Ascending aorta (tissue), 2 donors: ENCODE measurements at regions of chr3 and their contacts with region 1.

Region 1: GRCh38 chr3:49802719-49803464 is at the start of gene INKA1:
- DNase-seq: peak; percentile 49 to 93
- H3K4me3 ChIP-seq: peak within 1 kb of the TSS; percentile 84 to 86
- H3K27ac ChIP-seq: peak within 1 kb of the TSS; percentile 98
- H3K4me1 ChIP-seq: peaks cover 22 to 40% of the 10 kb centered on the region in 2 donors
- H3K27me3 ChIP-seq: no peaks in the 10 kb centered on the region
- CTCF ChIP-seq: peak; percentile 88 to 96 (median 89)
- total RNA-seq, gene INKA1: not detected

Region 2: GRCh38 chr3:49906004-49906743 is 103.3 kb after region 1 on chr3:
- intact Hi-C with region 1: loop called (anchors 1 kb)
- DNase-seq: peak in 1 of 2 donors; percentile 76
- H3K4me3 ChIP-seq: peak overlapping the region; percentile 5 to 53
- H3K27ac ChIP-seq: peak overlapping the region; percentile 50
- H3K4me1 ChIP-seq: peaks cover 0 to 14% of the 10 kb centered on the region in 2 donors
- H3K27me3 ChIP-seq: no peaks in the 10 kb centered on the region
- CTCF ChIP-seq: peak; percentile 60 to 74 (median 63)

Region 3: DNA sequence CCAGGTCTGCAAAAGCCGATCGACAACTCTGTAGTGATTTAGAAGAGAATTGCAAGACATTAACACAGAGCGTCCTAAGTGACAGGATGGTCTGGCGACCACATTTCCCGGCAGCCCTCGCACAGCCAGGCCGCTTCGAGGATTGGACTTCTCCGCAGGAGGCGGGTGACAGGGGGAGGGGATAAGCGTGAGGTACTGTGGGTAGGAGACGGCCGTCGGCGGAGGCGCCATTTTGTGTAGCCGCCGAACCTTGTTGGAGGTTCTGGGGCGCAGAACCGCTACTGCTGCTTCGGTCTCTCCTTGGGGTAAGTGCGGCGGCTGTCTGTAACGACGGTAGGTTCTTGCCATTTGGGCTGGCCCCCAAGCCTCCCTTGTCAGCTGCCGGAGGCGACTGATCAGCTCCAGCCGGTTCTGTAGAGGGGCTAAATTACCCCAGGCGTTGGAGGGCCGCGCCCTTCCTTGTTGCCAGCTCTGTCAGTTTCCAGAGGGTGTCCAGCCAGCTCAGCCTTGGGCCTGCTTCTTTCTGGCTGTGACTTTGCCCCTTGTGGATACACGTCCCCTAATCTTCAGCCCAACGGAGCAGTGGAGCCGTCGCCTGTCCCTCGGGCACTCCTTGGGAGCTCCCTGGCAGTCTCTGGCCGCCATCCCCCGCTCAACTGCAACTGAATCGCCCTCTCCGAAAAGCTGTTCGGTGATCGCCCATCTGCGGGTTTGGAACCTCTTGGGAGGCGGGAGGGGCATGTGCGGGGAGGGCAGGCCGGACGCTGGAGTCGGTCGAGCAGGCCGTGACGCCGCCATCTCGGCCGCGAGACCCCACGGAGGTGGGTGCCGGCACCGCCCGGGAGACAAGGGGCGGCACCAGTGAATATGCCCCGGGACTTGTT is 286.1 kb after region 1 on chr3 and contains the start of gene RBM5:
- intact Hi-C with region 1: loop called (anchors 5 kb)
- DNase-seq: peak; percentile 75 to 96
- H3K4me3 ChIP-seq: peak within 1 kb of the TSS; percentile 88 to 91
- H3K27ac ChIP-seq: peak within 1 kb of the TSS; percentile 96 to 97
- H3K4me1 ChIP-seq: peaks cover 2 to 21% of the 10 kb centered on the region in 2 donors
- H3K27me3 ChIP-seq: no peaks in the 10 kb centered on the region
- CTCF ChIP-seq: no peak
- total RNA-seq, gene RBM5: 105 TPM